Colonic mucosa (tissue), 4 donors: ENCODE measurements at regions of chr1 and their contacts with region 1.

Region 1: DNA sequence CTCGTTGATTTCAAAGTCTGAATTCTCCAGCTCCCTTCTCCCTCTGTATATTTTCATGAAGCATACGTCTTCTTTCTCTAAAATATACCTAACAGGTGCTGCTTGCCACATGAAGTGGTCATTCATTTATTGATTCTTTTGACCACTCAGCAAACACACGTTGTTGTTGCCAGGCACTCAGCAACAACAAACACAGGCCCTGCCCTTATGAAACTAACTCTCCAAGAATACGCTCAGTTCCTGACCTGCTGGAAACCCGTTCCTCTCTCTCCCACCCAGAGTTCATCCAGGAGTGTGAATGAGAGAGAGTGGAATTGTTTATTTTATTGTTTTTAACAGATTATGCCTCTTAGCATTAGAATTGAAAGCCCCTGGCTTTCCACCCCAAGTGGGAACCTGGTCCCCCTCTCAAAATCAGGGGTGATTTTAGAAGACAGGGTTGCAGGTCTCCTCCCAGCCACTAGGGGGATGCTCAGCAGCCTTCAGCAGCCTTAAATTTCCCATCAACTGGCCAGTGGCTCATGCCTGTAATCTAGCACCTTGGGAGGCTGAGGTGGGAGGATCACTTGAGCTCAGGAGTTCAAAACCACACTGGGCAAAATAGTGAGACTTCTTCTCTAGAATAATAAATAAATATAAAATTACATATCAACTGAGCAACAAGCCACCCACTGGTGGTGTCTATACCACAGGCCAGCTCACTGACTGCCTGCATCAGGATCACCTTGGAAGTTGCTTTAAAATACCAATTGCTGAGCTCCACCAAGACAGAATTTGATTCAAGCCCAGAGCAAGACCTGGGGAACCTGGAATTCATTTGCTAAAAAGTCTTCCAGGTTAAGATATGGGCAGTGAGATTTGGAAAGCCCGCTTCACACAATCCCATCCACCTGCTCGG is 181.0 kb upstream of the KLHDC7A start:
- DNase-seq: no peak
- H3K4me3 ChIP-seq: no peak overlapping the region
- H3K27ac ChIP-seq: no peak overlapping the region
- H3K4me1 ChIP-seq: no peaks in the 10 kb centered on the region
- H3K27me3 ChIP-seq: no peaks in the 10 kb centered on the region
- CTCF ChIP-seq: peak; percentile 76

Region 2: DNA sequence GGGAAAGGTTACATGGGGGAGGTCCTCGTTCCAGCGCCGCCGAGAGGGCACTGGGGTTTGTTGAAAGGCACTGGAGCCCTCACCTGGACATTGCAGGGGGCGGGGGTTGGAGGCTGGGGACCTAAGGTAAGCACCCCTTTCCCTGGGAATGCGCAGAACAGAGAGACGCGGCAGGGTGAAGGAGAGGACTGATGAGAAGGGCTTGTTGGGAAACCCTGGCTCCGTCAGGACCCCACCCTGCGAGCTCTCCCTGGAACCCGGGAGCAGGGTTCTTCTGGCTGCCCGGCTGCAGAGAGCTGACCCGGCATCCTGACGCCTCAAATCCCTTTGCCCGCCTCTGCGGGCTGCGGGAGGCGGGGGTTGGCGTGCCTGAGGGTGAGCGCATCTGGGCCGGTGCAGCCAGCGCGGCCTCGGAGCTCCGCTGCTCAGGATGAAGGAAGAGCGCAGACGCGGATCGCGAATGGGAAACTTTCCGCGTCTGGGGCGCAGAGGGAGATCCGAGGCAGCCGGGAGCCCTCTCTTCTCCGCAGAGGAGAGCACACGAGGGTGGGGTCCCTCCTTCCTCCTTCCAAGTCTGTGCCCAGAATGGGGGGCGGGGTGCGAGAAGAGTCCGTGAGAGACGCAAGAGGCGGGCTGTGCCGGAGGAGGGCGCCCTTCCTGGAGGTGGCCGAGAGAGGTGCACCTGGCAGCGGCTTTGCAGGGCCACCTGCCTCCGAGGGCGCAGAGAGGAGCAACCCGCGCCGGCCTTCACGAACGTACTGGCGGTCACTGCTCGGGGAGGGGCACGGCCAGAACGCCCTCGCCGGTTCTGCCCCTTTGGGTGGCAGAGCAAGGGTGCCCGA is 189.7 kb before region 1 on chr1:
- intact Hi-C with region 1: no loop called
- DNase-seq: peak; percentile 81
- H3K4me3 ChIP-seq: peak overlapping the region; percentile 13
- H3K27ac ChIP-seq: no peak overlapping the region
- H3K4me1 ChIP-seq: peaks cover 9% of the 10 kb centered on the region
- H3K27me3 ChIP-seq: peaks cover 53% of the 10 kb centered on the region
- CTCF ChIP-seq: no peak

Region 3: DNA sequence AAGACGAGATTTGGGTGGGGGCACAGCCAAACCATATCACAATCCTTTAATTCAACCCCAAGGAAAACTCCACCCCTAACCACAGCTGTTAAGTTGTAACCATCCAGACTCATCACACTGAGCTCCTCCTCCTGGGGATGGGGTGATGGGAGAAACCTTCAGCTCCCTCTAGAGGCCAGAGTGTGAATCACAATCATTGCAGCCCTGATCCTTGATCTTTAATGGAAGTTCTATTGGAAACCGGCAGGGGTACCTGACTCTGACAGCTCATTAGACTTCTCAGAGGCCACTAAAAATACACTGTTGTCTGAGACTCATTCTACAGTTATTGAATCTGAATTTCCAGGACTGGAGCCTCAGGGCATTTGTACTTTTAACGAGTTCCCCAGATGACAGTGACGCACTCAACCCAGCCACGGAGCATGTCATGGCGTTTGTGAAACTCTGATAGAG is 64.9 kb before region 1 on chr1:
- intact Hi-C with region 1: no loop called
- DNase-seq: peak; percentile 58
- H3K4me3 ChIP-seq: no peak overlapping the region
- H3K27ac ChIP-seq: no peak overlapping the region
- H3K4me1 ChIP-seq: no peaks in the 10 kb centered on the region
- H3K27me3 ChIP-seq: no peaks in the 10 kb centered on the region
- CTCF ChIP-seq: peak; percentile 53

Region 4: DNA sequence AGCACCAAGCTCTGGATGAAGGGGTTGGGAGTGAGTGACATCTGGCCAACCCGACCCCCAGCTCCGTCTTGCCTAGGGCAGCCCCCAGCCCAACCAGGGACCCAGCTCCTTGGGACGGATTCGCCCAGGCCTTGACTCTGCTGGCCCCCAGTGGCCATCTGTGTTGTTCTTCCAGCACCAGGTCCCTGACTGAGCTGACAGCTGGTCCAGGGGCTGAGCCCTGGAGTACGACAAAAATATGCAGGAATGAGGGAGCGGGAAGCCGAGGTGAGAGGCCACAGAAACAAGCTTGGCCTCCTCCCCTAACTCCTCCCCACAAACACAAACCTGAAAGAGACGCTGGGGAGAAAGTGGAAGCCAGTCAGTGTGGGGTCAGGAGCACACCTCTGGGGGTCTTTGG is 275.9 kb after region 1 on chr1:
- intact Hi-C with region 1: loop called (anchors 5 kb)
- DNase-seq: peak; percentile 64
- H3K4me3 ChIP-seq: no peak overlapping the region
- H3K27ac ChIP-seq: no peak overlapping the region
- H3K4me1 ChIP-seq: no peaks in the 10 kb centered on the region
- H3K27me3 ChIP-seq: no peaks in the 10 kb centered on the region
- CTCF ChIP-seq: peak; percentile 43